Esophagus muscularis mucosa (tissue), 4 donors: ENCODE measurements at regions of chr17 and their contacts with region 1.

Region 1: DNA sequence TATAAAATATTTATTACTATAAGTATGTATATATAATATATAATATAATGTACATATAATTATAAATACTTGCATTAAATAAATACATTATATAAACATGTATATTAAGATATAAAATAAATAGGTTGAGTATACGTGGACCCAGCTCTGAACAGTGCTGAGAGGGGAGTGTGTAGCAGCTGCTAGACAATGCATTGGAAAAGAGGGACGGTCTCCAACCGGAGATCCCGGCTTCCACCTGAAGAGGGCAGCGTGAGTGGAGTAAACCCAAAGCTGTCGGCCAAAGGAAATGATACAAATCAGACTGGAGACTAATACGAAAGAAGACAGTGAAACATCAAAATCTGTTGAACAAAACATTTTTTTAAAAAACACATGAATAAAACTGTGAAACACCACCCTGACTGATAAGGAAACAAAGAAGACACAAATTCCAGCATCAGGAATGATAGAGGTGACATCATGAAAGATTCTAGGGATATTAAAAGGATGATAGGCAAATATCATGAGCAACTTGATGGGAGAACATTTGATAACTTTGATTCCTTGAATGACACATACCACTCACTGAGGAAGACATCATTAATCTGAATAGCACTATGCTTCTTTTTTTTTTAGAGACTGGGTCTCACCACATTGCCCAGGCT is 125.4 kb upstream of the CHMP6 start:
- DNase-seq: no peak
- H3K4me3 ChIP-seq: no peak overlapping the region
- H3K27ac ChIP-seq: no peak overlapping the region
- H3K4me1 ChIP-seq: peaks cover 2 to 13% (median 5%) of the 10 kb centered on the region in 4 donors
- H3K27me3 ChIP-seq: no peaks in the 10 kb centered on the region
- CTCF ChIP-seq: peak; percentile 73 to 85 (median 81)
- EP300 ChIP-seq: no peak
- POLR2A ChIP-seq: no peak

Region 2: DNA sequence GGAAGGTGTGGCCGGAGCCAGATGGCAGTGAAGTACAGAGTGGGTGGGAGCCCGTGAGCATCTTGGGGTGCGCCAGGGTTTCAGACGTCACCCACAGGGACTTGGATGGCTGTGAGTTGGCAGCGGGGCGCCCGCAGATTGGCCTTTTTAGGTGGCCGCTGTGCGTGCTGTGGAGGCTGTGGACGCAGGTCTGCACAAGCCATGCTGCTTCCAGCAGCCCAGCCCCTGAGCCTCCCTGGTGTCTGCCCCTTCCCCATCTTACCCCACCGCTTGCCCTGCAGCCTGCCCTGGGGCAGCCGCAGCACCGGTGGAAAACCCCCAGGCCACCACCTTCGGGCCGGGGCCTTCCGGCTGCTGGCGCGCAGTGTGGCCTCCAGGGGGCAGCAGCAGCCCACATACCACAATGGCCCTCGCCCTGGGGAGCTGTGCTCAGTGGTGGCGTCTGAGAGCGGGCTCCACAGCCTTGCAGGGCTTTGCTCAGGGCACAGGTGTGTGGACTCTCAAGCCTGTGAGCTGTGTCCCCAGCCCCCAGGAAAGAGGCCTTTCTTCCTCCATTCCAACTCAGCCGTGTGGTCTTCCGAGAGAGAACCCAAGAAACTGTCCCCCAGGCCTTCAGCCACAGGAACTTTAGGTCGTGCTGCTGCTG is 439.5 kb before region 1 on chr17:
- intact Hi-C with region 1: loop called (anchors 10 kb)
- DNase-seq: no peak
- H3K4me3 ChIP-seq: no peak overlapping the region
- H3K27ac ChIP-seq: no peak overlapping the region
- H3K4me1 ChIP-seq: peaks cover 8 to 22% (median 9%) of the 10 kb centered on the region in 4 donors
- H3K27me3 ChIP-seq: no peaks in the 10 kb centered on the region
- CTCF ChIP-seq: peak in 2 of 3 experiments; percentile 97
- EP300 ChIP-seq: no peak
- POLR2A ChIP-seq: no peak

Region 3: GRCh38 chr17:80886641-80887573 is 20.6 kb after region 1 on chr17:
- intact Hi-C with region 1: no loop called
- DNase-seq: no peak
- H3K4me3 ChIP-seq: no peak overlapping the region
- H3K27ac ChIP-seq: no peak overlapping the region
- H3K4me1 ChIP-seq: peaks cover 0 to 17% (median 13%) of the 10 kb centered on the region in 4 donors
- H3K27me3 ChIP-seq: no peaks in the 10 kb centered on the region
- CTCF ChIP-seq: no peak
- EP300 ChIP-seq: no peak
- POLR2A ChIP-seq: no peak

Region 4: DNA sequence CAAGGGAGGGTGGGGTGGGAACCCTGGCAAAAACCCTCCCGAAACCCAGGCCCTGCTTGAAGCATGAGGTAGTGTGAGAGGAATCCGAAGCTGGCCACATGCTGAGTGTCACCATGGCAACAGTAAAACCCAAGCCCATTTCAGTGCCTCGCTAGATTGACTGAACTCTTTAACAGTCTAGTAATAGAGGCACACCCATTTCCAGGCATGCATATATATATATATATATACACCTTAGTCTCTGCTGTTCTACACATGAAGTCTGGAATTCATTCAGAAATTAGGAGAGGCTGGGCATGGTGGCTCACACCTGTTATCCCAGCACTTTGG is 65.6 kb after region 1 on chr17:
- intact Hi-C with region 1: loop called (anchors 10 kb)
- DNase-seq: no peak
- H3K4me3 ChIP-seq: no peak overlapping the region
- H3K27ac ChIP-seq: no peak overlapping the region
- H3K4me1 ChIP-seq: peaks cover 10 to 32% (median 12%) of the 10 kb centered on the region in 4 donors
- H3K27me3 ChIP-seq: no peaks in the 10 kb centered on the region
- CTCF ChIP-seq: no peak
- EP300 ChIP-seq: no peak
- POLR2A ChIP-seq: no peak